ENCODE measurements at regions of chr12 and their contacts with region 1.

Region 1: GRCh38 chr12:21731144-21731543 is 43.4 kb downstream of the KCNJ8 start:
- DNase-seq: no peak
- H3K4me3 ChIP-seq: no peak overlapping the region
- CTCF ChIP-seq: no peak
- POLR2A ChIP-seq: no peak

Region 2: DNA sequence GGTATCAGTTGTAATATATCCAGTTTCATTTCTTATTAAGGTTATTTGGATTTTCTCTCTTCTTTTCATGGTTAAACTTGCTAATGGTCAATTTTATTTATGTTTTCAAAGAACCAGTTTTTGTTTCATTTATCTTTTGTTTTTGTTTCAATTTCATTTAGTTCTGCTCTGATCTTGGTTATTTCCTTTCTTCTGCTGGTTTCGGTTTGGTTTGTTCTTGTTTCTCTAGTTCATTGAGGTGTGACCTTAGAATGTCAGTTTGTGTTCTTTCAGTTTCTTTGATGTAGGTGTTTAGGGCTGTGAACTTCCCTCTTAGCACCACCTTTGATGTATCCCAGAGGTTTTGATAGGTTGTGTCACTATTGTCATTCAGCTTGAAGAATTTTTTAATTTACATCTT is 745.7 kb before region 1 on chr12:
- intact Hi-C with region 1: loop called (anchors 5 kb)
- DNase-seq: no peak
- H3K4me3 ChIP-seq: no peak overlapping the region
- CTCF ChIP-seq: no peak
- POLR2A ChIP-seq: no peak